Activated T-helper 1 cell treated with anti-CD3 and anti-CD28 coated beads, Interleukin-12 subunit alpha, Interleukin-12 subunit beta, Interleukin-2, Interleukin-4 antibody, amounts not matched to agents 30 ng/mL and 10 ng/mL and 1 ng/mL, durations not matched to agents 14 hours and 24 hours and 36 hours (primary cell): ENCODE measurements at regions of chr21 and their contacts with region 1.

Region 1: GRCh38 chr21:28943631-28944030 is 49.0 kb downstream of the LTN1 start:
- DNase-seq: no peak
- H3K4me3 Mint-ChIP-seq: no peak overlapping the region
- H3K27ac Mint-ChIP-seq: no peak overlapping the region
- H3K4me1 Mint-ChIP-seq: peaks cover 4% of the 10 kb centered on the region
- H3K27me3 Mint-ChIP-seq: no peaks in the 10 kb centered on the region

Region 2: GRCh38 chr21:28516991-28517592 is 426.5 kb before region 1 on chr21:
- intact Hi-C with region 1: loop called (anchors 1 kb)
- DNase-seq: peak; percentile 43
- H3K4me3 Mint-ChIP-seq: no peak overlapping the region
- H3K27ac Mint-ChIP-seq: no peak overlapping the region
- H3K4me1 Mint-ChIP-seq: peaks cover 4% of the 10 kb centered on the region
- H3K27me3 Mint-ChIP-seq: peaks cover 2% of the 10 kb centered on the region